ENCODE measurements at regions of chr1 and their contacts with region 1.

Region 1: DNA sequence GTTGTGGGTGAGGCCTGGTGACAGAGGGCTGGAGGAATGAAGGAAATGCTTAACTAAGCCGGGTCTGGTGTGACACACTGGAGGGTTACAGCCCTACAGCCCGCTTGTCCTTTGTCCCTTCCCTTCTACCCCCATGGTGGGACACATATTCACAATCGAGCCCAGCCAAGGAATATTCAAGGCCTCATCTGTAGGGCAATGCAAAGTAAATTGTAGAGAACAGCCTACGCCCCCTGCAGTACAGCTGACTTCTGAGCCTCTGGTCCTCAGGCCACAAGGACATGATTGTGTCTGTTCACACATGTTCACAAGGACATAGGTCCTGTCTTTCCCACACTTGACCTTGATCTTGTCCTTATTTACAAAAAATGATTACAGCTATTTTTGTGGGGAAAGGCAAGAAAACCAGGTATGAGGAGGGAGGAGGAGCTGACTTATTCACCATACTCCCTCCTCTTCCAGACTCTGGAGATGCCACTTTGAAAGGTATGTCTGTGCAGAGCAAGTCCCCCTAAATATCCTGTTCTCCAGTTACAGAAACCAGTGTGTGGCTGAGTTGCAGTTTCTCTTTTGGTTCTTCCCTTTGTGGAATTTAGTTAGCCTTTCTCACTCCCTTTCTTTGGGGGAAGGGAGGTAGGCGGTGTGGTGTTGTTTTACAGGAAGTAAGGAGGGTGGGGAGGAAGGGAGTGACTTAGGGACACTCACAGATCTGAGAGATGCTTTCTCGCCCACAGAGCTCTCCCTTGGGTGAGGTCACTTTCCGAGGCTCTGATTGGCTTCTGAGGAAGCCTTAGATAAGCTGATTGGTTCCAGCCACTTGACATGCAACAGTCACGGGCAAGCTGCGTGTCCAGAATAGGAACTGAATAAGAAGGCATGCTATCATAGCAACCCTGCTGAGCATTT is 14.6 kb downstream of the POLR3GL start:
- DNase-seq: peak; percentile 85
- CTCF ChIP-seq: peak; percentile 42

Region 2: DNA sequence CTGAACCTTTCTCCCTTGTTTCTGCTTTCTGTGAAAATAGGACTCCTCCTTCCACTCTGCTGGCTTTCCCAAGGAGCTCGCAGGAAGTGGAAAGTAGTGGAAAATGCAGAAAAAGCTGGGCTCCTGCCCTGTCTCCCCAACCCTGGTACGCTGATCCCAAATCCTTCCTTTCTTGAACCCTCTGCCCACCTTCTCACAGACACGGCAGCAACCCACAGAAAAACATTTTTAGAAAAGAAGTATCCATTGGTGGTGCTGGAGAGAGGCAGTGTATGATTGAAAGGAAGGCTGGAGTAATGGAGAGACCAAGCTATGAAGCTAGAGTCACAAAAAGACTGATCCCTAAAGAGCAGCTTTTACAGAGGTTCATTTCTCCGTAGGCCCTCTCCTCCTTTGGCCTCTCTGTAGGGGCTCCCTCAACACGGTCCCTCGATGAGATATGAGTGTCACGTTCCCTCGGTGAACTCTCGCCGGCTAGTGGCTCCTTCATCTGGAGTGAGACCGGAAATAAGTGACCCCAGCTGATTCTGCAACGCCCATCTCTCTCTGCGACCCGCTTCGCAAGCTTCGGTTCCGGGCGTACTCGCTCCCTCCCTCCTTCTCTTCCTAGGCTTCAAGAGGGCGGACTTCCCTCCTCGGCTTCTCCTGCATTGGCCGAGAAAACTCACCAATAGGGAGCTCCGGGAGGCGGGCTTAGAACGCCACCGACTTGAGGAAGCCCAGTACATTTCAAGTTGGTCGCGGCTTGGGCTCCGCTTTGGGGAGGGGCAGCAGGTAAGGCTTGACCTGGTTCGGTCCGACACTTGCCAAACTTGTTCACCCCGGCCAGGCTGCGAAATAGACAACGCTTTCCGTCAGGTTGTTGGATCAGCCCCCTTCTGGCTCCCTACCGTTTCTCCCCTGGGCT is 14.9 kb before region 1 on chr1 and contains the starts of genes ANKRD34A and POLR3GL:
- CTCF ChIA-PET with region 1: interaction called, 113 read pairs
- POLR2A ChIA-PET with region 1: interaction called, 9 read pairs
- DNase-seq: peak; percentile 91
- CTCF ChIP-seq: no peak

Region 3: GRCh38 chr1:145996433-145997015 is 17.4 kb after region 1 on chr1 and contains the start of gene TXNIP:
- CTCF ChIA-PET with region 1: interaction called, 249 read pairs
- POLR2A ChIA-PET with region 1: interaction called, 7 read pairs
- DNase-seq: peak; percentile 96
- CTCF ChIP-seq: no peak

Region 4: GRCh38 chr1:146012737-146013403 is 33.8 kb after region 1 on chr1:
- CTCF ChIA-PET with region 1: interaction called, 249 read pairs
- POLR2A ChIA-PET with region 1: no interaction called
- DNase-seq: peak; percentile 65
- CTCF ChIP-seq: peak; percentile 77

Region 5: GRCh38 chr1:146036965-146037646 is 58.0 kb after region 1 on chr1:
- CTCF ChIA-PET with region 1: interaction called, 63 read pairs
- POLR2A ChIA-PET with region 1: no interaction called
- DNase-seq: peak; percentile 58
- CTCF ChIP-seq: no peak

Measured in GM10248 (cell line).